CD8-positive, alpha-beta T cell (primary cell): ENCODE measurements at regions of chr19 and their contacts with region 1.

Region 1: DNA sequence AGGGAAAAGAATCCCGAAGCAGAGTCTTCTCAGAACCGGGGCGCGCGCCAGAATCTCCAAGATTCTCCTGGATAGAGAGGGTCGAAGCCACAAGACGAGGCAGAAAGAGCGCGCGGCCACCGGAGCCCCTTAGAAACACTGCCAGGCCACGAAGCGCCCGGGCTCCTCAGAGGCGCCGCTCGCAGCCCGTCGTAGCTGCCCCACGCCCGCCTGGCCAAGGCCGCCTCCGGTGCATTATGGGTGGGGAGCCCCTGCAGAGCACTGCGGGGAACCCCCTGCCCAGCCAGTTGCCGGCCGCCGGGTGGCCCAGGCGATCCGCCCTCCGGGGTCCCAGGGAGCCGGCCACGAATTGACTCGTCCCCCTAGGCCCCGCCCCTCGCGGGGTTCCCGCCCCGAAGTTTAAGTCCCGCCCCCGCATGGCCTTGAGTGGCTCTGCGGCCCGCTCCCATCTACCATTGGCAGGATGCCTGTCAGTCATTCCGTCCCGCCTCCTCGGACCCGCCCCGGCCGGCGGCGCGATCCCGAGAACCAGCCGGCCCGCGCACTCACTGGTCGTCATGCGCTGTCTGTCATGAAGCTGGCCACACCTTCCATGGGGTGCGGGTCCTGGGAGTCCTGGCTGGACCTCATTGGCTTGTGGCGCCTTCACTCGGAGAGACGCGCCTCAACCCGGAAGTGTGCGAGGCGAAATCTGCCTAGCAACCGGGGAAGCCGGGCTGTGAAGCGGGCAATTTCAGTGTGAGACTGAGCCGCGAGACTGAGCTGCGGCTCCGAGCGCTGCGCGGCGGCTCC is 20.2 kb upstream of the GATAD2A start:
- DNase-seq: peak; percentile 99 to 100 (median 99)
- ATAC-seq: peak; percentile 86
- H3K4me3 ChIP-seq: peak overlapping the region; percentile 73 to 84
- H3K4me3 Mint-ChIP-seq: peak overlapping the region; percentile 93
- H3K27ac ChIP-seq: peak overlapping the region; percentile 71 to 88
- H3K27ac Mint-ChIP-seq: peak overlapping the region; percentile 92
- H3K4me1 ChIP-seq: peaks cover 45% of the 10 kb centered on the region
- H3K4me1 Mint-ChIP-seq: peaks cover 39% of the 10 kb centered on the region
- H3K27me3 ChIP-seq: no peaks in the 10 kb centered on the region
- H3K27me3 Mint-ChIP-seq: no peaks in the 10 kb centered on the region
- CTCF ChIP-seq: no peak

Region 2: GRCh38 chr19:19361075-19361594 is 24.2 kb before region 1 on chr19:
- CTCF ChIA-PET with region 1: interaction called, 4 read pairs
- POLR2A ChIA-PET with region 1: interaction called, 6 read pairs
- intact Hi-C with region 1: loop called in 1 of 2 experiments (anchors 1 kb)
- DNase-seq: peak; percentile 28 to 88 (median 69)
- ATAC-seq: peak; percentile 64
- H3K4me3 ChIP-seq: no peak overlapping the region
- H3K4me3 Mint-ChIP-seq: peak overlapping the region; percentile 36
- H3K27ac ChIP-seq: no peak overlapping the region
- H3K27ac Mint-ChIP-seq: peak overlapping the region; percentile 23
- H3K4me1 ChIP-seq: peaks cover 27% of the 10 kb centered on the region
- H3K4me1 Mint-ChIP-seq: peaks cover 37% of the 10 kb centered on the region
- H3K27me3 ChIP-seq: no peaks in the 10 kb centered on the region
- H3K27me3 Mint-ChIP-seq: no peaks in the 10 kb centered on the region
- CTCF ChIP-seq: peak; percentile 72

Region 3: DNA sequence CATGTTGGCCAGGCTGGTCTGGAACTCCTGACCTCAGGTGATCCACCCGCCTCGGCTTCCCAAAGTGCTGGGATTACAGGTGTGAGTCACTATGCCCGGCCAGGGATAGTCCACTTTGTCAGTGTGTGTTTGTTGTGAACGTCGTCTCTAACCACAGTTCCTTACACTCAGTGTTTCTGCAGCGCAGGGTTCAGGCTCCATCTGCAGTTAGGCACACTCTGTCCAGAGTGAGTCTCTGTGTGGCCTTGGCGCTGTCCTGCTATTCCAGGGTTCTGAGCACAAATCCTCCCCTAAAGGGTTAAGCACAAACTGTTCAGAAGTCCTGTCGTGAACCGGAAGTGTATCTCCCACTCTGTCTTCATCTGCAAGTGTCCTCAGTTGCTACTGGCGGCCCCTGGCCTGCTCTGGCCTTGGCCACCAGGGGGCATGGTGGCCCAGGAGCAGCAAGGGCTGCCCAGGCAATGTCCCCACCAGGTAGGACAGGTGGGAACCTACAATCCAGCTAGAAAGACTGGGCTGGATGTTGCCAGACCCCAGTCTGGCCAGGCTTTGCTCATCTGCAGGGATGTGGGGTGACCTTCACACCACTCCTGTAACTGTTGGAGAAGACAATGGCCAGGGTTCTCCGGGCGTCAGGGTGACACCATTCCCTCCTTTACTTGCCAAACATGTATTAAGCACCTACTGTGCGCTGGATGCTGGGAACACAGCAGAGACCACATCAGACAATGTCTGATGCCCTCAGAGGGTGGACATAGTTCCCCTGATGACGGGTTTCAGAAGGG is 18.5 kb before region 1 on chr19:
- CTCF ChIA-PET with region 1: interaction called, 9 read pairs
- POLR2A ChIA-PET with region 1: interaction called, 6 read pairs
- intact Hi-C with region 1: loop called (anchors 1 kb)
- DNase-seq: peak; percentile 35 to 85 (median 66)
- ATAC-seq: peak; percentile 57
- H3K4me3 ChIP-seq: no peak overlapping the region
- H3K4me3 Mint-ChIP-seq: peak overlapping the region; percentile 53
- H3K27ac ChIP-seq: no peak overlapping the region
- H3K27ac Mint-ChIP-seq: no peak overlapping the region
- H3K4me1 ChIP-seq: peaks cover 23% of the 10 kb centered on the region
- H3K4me1 Mint-ChIP-seq: peaks cover 16% of the 10 kb centered on the region
- H3K27me3 ChIP-seq: no peaks in the 10 kb centered on the region
- H3K27me3 Mint-ChIP-seq: no peaks in the 10 kb centered on the region
- CTCF ChIP-seq: peak; percentile 81

Region 4: DNA sequence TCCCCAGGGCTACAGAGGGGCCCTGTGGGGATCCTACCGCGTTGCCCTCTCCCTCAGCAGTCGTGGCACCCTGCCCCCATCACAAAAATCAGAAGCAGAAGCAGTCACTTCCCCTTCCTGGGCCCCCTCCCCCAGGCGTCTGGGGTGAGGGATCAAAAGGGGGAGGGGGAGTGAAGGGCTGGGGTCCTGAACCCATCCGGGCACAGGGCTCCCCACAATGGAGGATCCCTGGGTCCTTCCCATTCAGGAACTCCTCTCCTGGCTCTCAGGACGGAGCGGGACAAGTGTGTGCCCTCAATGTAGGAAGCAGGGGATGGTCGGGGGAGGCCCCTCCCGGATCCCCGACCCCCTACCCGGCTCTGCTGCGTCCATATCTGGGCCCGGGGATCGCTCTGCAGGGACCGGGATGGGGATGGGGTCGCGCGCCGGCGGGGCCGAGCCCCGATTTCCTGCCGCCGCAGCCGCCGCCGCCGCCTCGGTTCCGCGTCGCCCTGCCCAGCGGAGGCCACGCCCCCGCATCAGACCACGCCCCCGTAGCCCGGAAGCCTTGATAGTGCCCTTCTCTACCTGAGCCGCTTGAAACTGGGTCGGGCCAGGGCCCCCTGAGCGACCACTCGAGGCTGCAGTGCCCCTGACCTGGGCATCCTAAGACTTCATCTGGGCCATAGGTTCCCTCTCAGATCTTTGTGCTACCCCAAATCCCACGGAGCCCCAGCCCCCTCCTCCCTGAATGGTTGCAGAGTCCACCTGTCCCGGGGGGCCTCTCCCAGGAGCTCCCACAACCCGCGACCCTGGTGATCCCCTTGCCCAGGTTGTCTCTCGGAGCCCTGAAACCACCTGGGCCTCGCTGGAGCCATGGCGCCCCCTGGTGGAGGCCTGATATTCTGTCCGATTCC is 258.1 kb after region 1 on chr19 and contains the start of gene GMIP:
- CTCF ChIA-PET with region 1: no interaction called
- POLR2A ChIA-PET with region 1: no interaction called
- intact Hi-C with region 1: no loop called
- DNase-seq: peak; percentile 79 to 96 (median 91)
- ATAC-seq: peak; percentile 93
- H3K4me3 ChIP-seq: peak within 1 kb of the TSS; percentile 100
- H3K4me3 Mint-ChIP-seq: peak within 1 kb of the TSS; percentile 95
- H3K27ac ChIP-seq: peak within 1 kb of the TSS; percentile 92 to 93
- H3K27ac Mint-ChIP-seq: peak within 1 kb of the TSS; percentile 93
- H3K4me1 ChIP-seq: peaks cover 20% of the 10 kb centered on the region
- H3K4me1 Mint-ChIP-seq: peaks cover 20% of the 10 kb centered on the region
- H3K27me3 ChIP-seq: no peaks in the 10 kb centered on the region
- H3K27me3 Mint-ChIP-seq: no peaks in the 10 kb centered on the region
- CTCF ChIP-seq: peak; percentile 83
- total RNA-seq, gene GMIP: 82.7 to 85.7 TPM